Naive thymus-derived CD4-positive, alpha-beta T cell (primary cell): ENCODE measurements at regions of chr1 and their contacts with region 1.

Region 1: GRCh38 chr1:153532769-153533599 is 2.8 kb downstream of the S100A6 start:
- DNase-seq: peak; percentile 62 to 85 (median 78)
- ATAC-seq: peak; percentile 55
- H3K4me3 ChIP-seq: peak overlapping the region; percentile 49
- H3K4me3 Mint-ChIP-seq: peak overlapping the region; percentile 77 to 98 (median 96)
- H3K27ac ChIP-seq: peak overlapping the region; percentile 98
- H3K27ac Mint-ChIP-seq: peak overlapping the region; percentile 86 to 99 (median 96)
- H3K4me1 ChIP-seq: peaks cover 53 to 59% of the 10 kb centered on the region in 2 donors
- H3K4me1 Mint-ChIP-seq: peaks cover 46 to 75% (median 63%) of the 10 kb centered on the region in 7 donors
- H3K27me3 ChIP-seq: no peaks in the 10 kb centered on the region
- H3K27me3 Mint-ChIP-seq: no peaks in the 10 kb centered on the region

Region 2: GRCh38 chr1:153510984-153511410 is 22.0 kb before region 1 on chr1:
- CTCF ChIA-PET with region 1: interaction called, 30 read pairs
- POLR2A ChIA-PET with region 1: interaction called, 7 read pairs
- intact Hi-C with region 1: loop called (anchors 1 to 2 kb)
- DNase-seq: peak; percentile 47 to 82 (median 68)
- ATAC-seq: peak; percentile 92
- H3K4me3 ChIP-seq: no peak overlapping the region
- H3K4me3 Mint-ChIP-seq: no peak overlapping the region
- H3K27ac ChIP-seq: no peak overlapping the region
- H3K27ac Mint-ChIP-seq: peak overlapping the region in 1 of 9 donors; percentile 10
- H3K4me1 ChIP-seq: peaks cover 3 to 4% of the 10 kb centered on the region in 2 donors
- H3K4me1 Mint-ChIP-seq: peaks cover 0 to 21% (median 6%) of the 10 kb centered on the region in 7 donors
- H3K27me3 ChIP-seq: no peaks in the 10 kb centered on the region
- H3K27me3 Mint-ChIP-seq: no peaks in the 10 kb centered on the region

Region 3: GRCh38 chr1:153545067-153546055 is 12.4 kb after region 1 on chr1 and contains the start of gene S100A4:
- CTCF ChIA-PET with region 1: interaction called, 97 read pairs
- POLR2A ChIA-PET with region 1: interaction called, 268 read pairs
- intact Hi-C with region 1: loop called (anchors 1 kb)
- DNase-seq: peak; percentile 50 to 93 (median 89)
- ATAC-seq: peak; percentile 84
- H3K4me3 ChIP-seq: peak within 1 kb of the TSS; percentile 69
- H3K4me3 Mint-ChIP-seq: peak within 1 kb of the TSS; percentile 85 to 97 (median 88)
- H3K27ac ChIP-seq: peak within 1 kb of the TSS; percentile 79
- H3K27ac Mint-ChIP-seq: peak within 1 kb of the TSS; percentile 93 to 99 (median 98)
- H3K4me1 ChIP-seq: peaks cover 53 to 69% of the 10 kb centered on the region in 2 donors
- H3K4me1 Mint-ChIP-seq: peaks cover 62 to 87% (median 74%) of the 10 kb centered on the region in 7 donors
- H3K27me3 ChIP-seq: no peaks in the 10 kb centered on the region
- H3K27me3 Mint-ChIP-seq: no peaks in the 10 kb centered on the region
- total RNA-seq, gene S100A4: 54.0 to 766 (median 204) TPM

Region 4: DNA sequence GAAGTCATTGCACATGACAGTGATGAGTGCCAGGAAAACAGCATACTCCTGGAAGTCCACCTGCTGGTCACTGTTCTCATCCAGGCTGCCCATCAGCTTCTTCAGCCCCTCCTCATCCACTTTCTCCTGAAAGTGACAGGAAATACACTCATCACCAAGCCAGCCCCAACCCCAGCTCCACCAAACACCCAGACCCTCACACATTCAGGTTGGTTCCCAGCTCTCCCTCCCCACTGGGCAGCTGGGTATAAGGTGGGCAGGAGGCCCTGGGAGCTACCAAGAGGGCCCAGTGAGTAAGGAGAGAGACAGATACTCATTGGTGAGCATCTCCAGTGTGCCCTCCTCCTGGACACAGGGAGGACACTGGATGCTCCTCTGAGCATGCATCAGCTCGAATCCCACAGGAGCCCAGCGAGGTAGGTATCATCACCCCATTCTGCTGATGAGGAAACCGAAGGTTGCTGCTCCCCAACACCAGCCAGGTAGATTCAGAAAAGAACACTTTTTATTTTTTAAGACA is 28.5 kb after region 1 on chr1:
- CTCF ChIA-PET with region 1: interaction called, 31 read pairs
- POLR2A ChIA-PET with region 1: interaction called, 16 read pairs
- intact Hi-C with region 1: no loop called
- DNase-seq: no peak
- ATAC-seq: no peak
- H3K4me3 ChIP-seq: no peak overlapping the region
- H3K4me3 Mint-ChIP-seq: no peak overlapping the region
- H3K27ac ChIP-seq: no peak overlapping the region
- H3K27ac Mint-ChIP-seq: peak overlapping the region in 2 of 9 donors; percentile 33 to 67
- H3K4me1 ChIP-seq: peaks cover 4 to 8% of the 10 kb centered on the region in 2 donors
- H3K4me1 Mint-ChIP-seq: peaks cover 7 to 15% (median 8%) of the 10 kb centered on the region in 7 donors
- H3K27me3 ChIP-seq: no peaks in the 10 kb centered on the region
- H3K27me3 Mint-ChIP-seq: no peaks in the 10 kb centered on the region

Region 5: DNA sequence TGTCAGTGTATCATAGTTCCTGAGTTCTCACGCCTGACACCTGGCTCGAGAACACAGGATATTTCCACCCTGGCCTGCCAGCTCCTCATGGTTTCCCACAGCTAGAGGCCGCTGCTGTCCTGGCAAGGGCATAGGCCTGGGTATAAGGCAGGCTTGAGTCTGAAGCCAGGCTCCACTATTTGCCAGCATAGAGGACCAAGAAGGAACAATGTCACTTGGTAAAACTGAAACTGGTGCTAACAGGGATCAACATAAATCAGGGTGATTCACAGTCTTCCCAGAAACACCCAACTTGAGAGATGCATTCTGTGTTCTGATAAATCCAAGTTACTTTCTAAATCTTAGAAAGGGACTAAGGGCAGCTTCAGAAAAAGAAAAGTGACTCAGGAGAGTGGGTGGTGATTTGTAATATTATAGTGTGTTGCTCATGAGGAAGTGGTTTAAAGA is 39.6 kb after region 1 on chr1:
- CTCF ChIA-PET with region 1: interaction called, 139 read pairs
- POLR2A ChIA-PET with region 1: interaction called, 58 read pairs
- intact Hi-C with region 1: loop called (anchors 1 kb)
- DNase-seq: peak in 8 of 9 donors; percentile 24 to 51 (median 41)
- ATAC-seq: peak; percentile 81
- H3K4me3 ChIP-seq: no peak overlapping the region
- H3K4me3 Mint-ChIP-seq: no peak overlapping the region
- H3K27ac ChIP-seq: no peak overlapping the region
- H3K27ac Mint-ChIP-seq: peak overlapping the region in 1 of 9 donors; percentile 56
- H3K4me1 ChIP-seq: peaks cover 0 to 9% of the 10 kb centered on the region in 2 donors
- H3K4me1 Mint-ChIP-seq: peaks cover 9 to 23% (median 16%) of the 10 kb centered on the region in 7 donors
- H3K27me3 ChIP-seq: no peaks in the 10 kb centered on the region
- H3K27me3 Mint-ChIP-seq: peaks cover 0 to 16% (median 9%) of the 10 kb centered on the region in 5 donors

Region 6: DNA sequence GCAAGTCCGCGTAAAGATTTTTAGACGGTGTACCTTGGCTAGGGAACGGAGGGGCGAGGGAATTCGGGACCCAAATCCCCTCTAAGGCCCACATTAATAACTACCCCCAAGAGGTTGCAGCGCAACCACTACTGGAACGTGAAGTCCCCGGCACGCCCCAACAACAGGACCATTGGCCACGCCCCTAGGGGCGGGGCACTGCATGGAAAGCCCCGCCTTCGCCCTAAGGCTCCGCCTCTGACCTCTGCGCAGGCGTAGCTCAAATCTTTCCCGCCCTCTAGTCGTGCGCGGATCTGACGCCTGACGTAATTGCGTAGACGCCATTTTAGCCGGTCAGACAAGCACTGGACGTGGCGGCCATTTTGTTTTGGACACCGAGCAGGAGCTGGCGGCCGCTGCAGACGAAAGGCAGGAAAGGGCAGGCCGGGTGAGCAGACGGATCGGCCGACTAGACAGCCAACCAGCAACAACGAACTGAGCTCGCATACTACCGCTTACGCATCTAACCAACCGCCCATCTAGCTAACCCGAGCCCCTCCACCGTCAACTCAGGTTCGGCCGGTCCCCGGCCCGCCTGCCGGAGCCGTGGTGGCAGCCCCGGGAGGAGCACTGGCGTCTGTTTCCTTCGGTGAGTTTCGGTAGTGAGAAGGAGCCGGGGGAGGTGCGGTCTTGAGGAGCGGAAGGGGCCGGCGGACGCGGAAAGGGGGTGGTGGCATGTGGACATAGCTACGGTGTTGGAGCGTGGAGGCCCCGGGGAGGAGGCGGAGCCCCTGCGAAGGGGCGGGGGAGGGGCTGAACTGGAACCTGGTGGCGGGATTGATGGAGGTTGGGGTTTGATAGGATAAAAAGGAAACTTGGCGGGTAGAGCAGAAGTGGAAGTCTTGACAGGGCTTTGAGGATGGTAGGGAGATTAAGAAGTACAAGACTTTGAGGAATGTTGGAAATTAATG is 101.0 kb after region 1 on chr1 and contains the start of gene CHTOP:
- CTCF ChIA-PET with region 1: interaction called, 5 read pairs
- POLR2A ChIA-PET with region 1: interaction called, 10 read pairs
- intact Hi-C with region 1: loop called in 1 of 2 experiments (anchors 5 kb)
- DNase-seq: peak; percentile 96 to 99 (median 96)
- ATAC-seq: peak; percentile 95
- H3K4me3 ChIP-seq: peak within 1 kb of the TSS; percentile 99
- H3K4me3 Mint-ChIP-seq: peak within 1 kb of the TSS; percentile 97 to 100 (median 99)
- H3K27ac ChIP-seq: peak within 1 kb of the TSS; percentile 98
- H3K27ac Mint-ChIP-seq: peak within 1 kb of the TSS; percentile 98 to 100 (median 100)
- H3K4me1 ChIP-seq: peaks cover 11 to 25% of the 10 kb centered on the region in 2 donors
- H3K4me1 Mint-ChIP-seq: peaks cover 30 to 52% (median 41%) of the 10 kb centered on the region in 7 donors
- H3K27me3 ChIP-seq: no peaks in the 10 kb centered on the region
- H3K27me3 Mint-ChIP-seq: peaks cover 0 to 3% (median 0%) of the 10 kb centered on the region in 5 donors
- total RNA-seq, gene CHTOP: 85.2 to 143 (median 116) TPM

Region 7: GRCh38 chr1:153967082-153968000 is 434.4 kb after region 1 on chr1 and contains the start of gene CREB3L4:
- CTCF ChIA-PET with region 1: no interaction called
- POLR2A ChIA-PET with region 1: no interaction called
- intact Hi-C with region 1: loop called in 1 of 2 experiments (anchors 10 kb)
- DNase-seq: peak; percentile 68 to 89 (median 84)
- ATAC-seq: peak; percentile 91
- H3K4me3 ChIP-seq: peak within 1 kb of the TSS; percentile 89
- H3K4me3 Mint-ChIP-seq: peak within 1 kb of the TSS; percentile 83 to 97 (median 92)
- H3K27ac ChIP-seq: peak within 1 kb of the TSS; percentile 79
- H3K27ac Mint-ChIP-seq: peak within 1 kb of the TSS; percentile 87 to 99 (median 94)
- H3K4me1 ChIP-seq: peaks cover 32 to 40% of the 10 kb centered on the region in 2 donors
- H3K4me1 Mint-ChIP-seq: peaks cover 27 to 72% (median 57%) of the 10 kb centered on the region in 7 donors
- H3K27me3 ChIP-seq: no peaks in the 10 kb centered on the region
- H3K27me3 Mint-ChIP-seq: no peaks in the 10 kb centered on the region
- total RNA-seq, gene CREB3L4: 4.6 to 8.4 (median 7.0) TPM

Region 8: GRCh38 chr1:155250633-155251449 is 1717.9 kb after region 1 on chr1:
- CTCF ChIA-PET with region 1: no interaction called
- POLR2A ChIA-PET with region 1: no interaction called
- intact Hi-C with region 1: no loop called
- DNase-seq: peak; percentile 86 to 98 (median 93)
- ATAC-seq: peak; percentile 99
- H3K4me3 ChIP-seq: peak overlapping the region; percentile 54
- H3K4me3 Mint-ChIP-seq: peak overlapping the region in 9 of 10 donors; percentile 45 to 83 (median 62)
- H3K27ac ChIP-seq: peak overlapping the region; percentile 49
- H3K27ac Mint-ChIP-seq: peak overlapping the region in 7 of 9 donors; percentile 29 to 86 (median 69)
- H3K4me1 ChIP-seq: peaks cover 4 to 10% of the 10 kb centered on the region in 2 donors
- H3K4me1 Mint-ChIP-seq: peaks cover 21 to 36% (median 24%) of the 10 kb centered on the region in 7 donors
- H3K27me3 ChIP-seq: no peaks in the 10 kb centered on the region
- H3K27me3 Mint-ChIP-seq: no peaks in the 10 kb centered on the region